Tibial artery (tissue), 4 donors: ENCODE measurements at regions of chr10 and their contacts with region 1.

Region 1: GRCh38 chr10:576130-576465 is 113.4 kb downstream of the DIP2C start:
- DNase-seq: peak; percentile 33 to 81
- H3K4me3 ChIP-seq: peak overlapping the region in 1 of 2 donors; percentile 1
- H3K27ac ChIP-seq: peak overlapping the region; percentile 2 to 41
- H3K4me1 ChIP-seq: peaks cover 5 to 55% (median 23%) of the 10 kb centered on the region in 4 donors
- H3K27me3 ChIP-seq: no peaks in the 10 kb centered on the region
- CTCF ChIP-seq: no peak

Region 2: GRCh38 chr10:387909-388660 is 188.0 kb before region 1 on chr10:
- intact Hi-C with region 1: no loop called
- DNase-seq: peak; percentile 41 to 69
- H3K4me3 ChIP-seq: peak overlapping the region in 1 of 2 donors; percentile 18
- H3K27ac ChIP-seq: no peak overlapping the region
- H3K4me1 ChIP-seq: peaks cover 0 to 4% (median 2%) of the 10 kb centered on the region in 4 donors
- H3K27me3 ChIP-seq: no peaks in the 10 kb centered on the region
- CTCF ChIP-seq: no peak

Region 3: DNA sequence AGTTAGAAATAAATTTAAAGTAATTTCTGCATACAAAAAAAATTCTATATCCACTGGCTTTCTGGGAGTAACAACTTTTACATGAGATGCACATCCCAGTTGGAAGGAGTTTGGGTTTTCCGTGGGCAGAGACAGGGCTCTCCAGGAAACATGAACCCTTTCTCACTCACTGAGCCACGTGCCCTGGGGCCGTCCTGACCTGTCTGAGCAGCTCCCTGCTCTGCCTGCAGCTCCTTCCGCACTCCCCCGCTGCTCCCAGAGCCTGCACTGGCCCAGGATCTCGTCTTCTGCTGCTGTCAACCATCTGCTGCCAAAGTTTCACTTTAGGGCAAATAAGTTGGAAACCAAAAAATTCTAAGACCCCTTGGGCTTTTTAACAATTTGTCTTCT is 55.7 kb before region 1 on chr10:
- intact Hi-C with region 1: loop called (anchors 10 kb)
- DNase-seq: peak in 1 of 2 donors; percentile 48
- H3K4me3 ChIP-seq: no peak overlapping the region
- H3K27ac ChIP-seq: no peak overlapping the region
- H3K4me1 ChIP-seq: peaks cover 0 to 30% (median 2%) of the 10 kb centered on the region in 4 donors
- H3K27me3 ChIP-seq: no peaks in the 10 kb centered on the region
- CTCF ChIP-seq: no peak